ENCODE measurements at regions of chr14 and their contacts with region 1.

Region 1: DNA sequence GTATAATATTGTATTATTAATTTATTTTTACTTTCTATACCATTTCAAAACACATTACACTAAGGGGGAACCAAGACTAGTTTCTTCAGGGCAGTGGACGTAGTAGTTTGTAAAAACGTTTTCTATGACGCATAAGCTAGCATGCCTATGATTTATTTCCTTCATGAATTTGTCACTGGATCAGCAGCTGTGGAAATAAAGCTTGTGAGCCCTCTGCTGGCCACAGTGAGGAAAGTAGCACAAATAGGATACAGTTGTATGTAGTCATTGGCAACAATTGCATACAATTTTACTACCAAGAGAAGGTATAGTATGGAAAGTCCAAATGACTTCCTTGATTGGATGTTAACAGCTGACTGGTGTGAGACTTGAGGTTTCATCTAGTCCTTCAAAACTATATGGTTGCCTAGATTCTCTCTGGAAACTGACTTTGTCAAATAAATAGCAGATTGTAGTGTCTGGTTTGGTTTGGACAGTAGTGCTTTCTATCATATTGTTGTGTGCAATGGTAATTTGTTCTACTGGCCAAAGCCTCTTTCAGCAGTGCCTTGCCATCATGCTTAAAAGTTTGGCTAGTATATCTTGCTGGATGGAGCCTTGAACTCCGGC is 24.3 kb upstream of the PLEKHD1 start:
- DNase-seq: peak; percentile 93
- H3K4me3 ChIP-seq: no peak overlapping the region
- H3K27ac ChIP-seq: peak overlapping the region; percentile 36
- H3K4me1 ChIP-seq: peaks cover 12% of the 10 kb centered on the region
- H3K27me3 ChIP-seq: no peaks in the 10 kb centered on the region

Region 2: GRCh38 chr14:68961781-68962584 is 498.2 kb before region 1 on chr14:
- in situ Hi-C with region 1: no loop called
- DNase-seq: peak; percentile 65
- H3K4me3 ChIP-seq: no peak overlapping the region
- H3K27ac ChIP-seq: peak overlapping the region; percentile 37
- H3K4me1 ChIP-seq: peaks cover 68% of the 10 kb centered on the region
- H3K27me3 ChIP-seq: no peaks in the 10 kb centered on the region

Region 3: GRCh38 chr14:69242311-69243224 is 217.6 kb before region 1 on chr14:
- in situ Hi-C with region 1: loop called (anchors 25 kb)
- DNase-seq: peak; percentile 78
- H3K4me3 ChIP-seq: peak overlapping the region; percentile 39
- H3K27ac ChIP-seq: peak overlapping the region; percentile 16
- H3K4me1 ChIP-seq: peaks cover 16% of the 10 kb centered on the region; the same call in 1 of the 2 replicates
- H3K27me3 ChIP-seq: no peaks in the 10 kb centered on the region